ENCODE measurements at regions of chr1 and their contacts with region 1.

Region 1: GRCh38 chr1:225772323-225772768 is 5.3 kb upstream of the SRP9 start:
- DNase-seq: peak; percentile 87
- H3K4me3 ChIP-seq: no peak overlapping the region
- H3K27ac ChIP-seq: no peak overlapping the region
- H3K4me1 ChIP-seq: peaks cover 19% of the 10 kb centered on the region
- H3K27me3 ChIP-seq: no peaks in the 10 kb centered on the region
- CTCF ChIP-seq: peak; percentile 88 to 90
- POLR2A ChIP-seq: no peak

Region 2: DNA sequence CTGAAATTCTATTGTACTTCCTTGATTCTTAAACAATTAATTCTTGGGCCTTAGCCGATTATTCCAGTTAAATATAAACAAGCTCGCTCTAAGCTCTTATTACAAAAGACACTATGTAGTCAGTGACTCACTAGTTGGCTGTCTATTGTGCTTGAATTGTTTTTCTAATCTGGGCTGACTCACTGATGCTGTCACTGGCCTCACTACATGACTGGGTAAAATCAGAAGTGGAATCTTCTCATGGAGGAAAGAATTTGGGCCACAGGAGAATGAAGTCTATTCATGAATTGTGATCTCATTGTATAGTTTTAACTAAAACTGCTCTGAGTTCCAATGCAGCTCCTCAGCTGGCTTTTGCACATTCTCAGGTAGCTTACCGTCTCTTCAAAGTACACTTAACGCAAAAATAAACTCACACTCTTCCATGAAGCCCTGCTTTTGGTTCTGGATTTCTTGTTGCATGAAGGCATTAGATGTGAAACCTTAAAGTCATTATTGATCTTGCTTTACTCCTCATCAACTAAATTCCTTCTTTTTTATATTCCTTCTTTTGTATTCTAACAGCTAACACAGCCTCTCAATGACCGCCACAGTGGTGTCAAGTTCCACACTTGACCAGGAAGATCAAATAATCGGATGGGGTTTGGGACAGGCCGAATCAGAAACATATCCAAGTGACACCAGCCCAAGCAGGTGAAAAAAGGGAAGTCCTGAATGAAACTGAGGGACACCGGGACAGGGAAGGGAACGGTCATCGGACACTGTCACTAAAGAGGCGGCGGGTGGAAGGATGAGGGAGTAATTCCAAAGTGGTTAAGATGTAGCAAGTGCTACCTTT is 263.6 kb before region 1 on chr1:
- CTCF ChIA-PET with region 1: interaction called, 19 read pairs
- POLR2A ChIA-PET with region 1: interaction called, 4 read pairs
- dilution Hi-C with region 1: no loop called
- intact Hi-C with region 1: no loop called
- DNase-seq: peak; percentile 97
- H3K4me3 ChIP-seq: no peak overlapping the region
- H3K27ac ChIP-seq: peak overlapping the region; percentile 72
- H3K4me1 ChIP-seq: peaks cover 23% of the 10 kb centered on the region
- H3K27me3 ChIP-seq: no peaks in the 10 kb centered on the region
- CTCF ChIP-seq: no peak
- POLR2A ChIP-seq: no peak

Region 3: DNA sequence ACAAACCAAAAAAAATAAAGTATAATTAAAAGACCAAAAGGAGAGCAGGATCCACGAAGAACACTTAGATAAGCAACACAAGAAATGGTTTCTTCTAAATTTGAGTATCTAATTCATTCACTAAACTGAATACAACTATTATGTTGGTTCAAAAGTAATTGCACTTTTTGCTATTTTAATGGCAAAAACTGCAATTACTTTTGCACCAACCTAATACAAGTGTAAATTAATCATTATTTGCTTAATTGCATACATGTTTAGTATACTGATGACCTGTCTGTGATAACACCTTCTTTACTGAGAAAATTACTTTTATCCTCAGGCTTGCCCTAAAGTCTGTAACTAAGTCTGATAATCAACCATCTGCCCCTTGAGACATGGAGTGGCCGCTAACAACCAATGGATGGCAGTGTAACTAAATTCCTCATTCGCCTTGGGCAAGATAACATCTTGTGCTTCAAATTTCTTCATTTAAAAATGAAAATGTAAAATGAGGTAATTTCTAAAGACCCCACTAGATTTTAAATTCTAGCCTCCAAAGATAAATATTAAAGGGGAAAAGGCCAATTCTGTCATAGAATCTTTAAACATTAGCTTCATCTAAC is 204.7 kb before region 1 on chr1:
- CTCF ChIA-PET with region 1: interaction called, 16 read pairs
- POLR2A ChIA-PET with region 1: no interaction called
- dilution Hi-C with region 1: no loop called
- intact Hi-C with region 1: loop called (anchors 1 kb)
- DNase-seq: peak; percentile 22
- H3K4me3 ChIP-seq: no peak overlapping the region
- H3K27ac ChIP-seq: no peak overlapping the region
- H3K4me1 ChIP-seq: no peaks in the 10 kb centered on the region
- H3K27me3 ChIP-seq: no peaks in the 10 kb centered on the region
- CTCF ChIP-seq: no peak
- POLR2A ChIP-seq: no peak

Region 4: DNA sequence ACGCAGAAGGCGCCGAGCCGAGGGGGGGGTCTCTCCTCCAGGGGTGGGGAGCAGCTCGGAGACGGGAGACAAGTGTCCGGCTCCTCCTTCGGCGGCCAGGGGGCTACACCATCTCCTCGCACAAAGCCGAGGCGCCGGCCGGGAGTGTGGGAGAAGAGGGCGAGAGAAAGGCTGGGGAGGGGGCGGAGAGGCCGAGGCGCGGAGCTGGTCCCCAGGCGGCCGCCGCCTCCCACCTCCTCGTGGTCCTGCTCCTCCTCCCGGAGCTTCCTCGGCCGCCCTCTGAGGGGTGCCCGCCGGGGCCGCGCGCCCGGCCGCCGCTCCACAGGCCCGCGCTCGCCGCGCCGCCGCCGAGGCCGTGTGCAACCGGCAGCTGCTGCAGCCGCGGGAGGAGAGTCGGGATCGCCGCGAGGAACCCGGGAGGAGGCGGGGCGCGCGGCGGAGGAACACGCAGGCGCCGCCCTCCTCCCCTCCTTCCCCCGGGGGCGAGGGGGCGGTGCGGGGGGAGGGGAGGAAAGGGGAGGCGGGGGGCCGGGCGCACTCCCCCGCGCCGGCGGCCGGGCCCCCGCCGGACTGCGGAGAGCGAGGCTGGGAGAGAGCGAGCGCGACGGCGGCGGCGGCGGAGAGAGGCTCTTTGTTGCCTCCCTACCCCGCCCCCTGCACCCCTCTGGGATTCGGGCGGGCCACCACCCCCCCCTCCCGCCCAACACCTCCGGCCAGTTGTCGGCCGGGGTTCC is 119.5 kb before region 1 on chr1 and contains the start of gene ENAH:
- CTCF ChIA-PET with region 1: interaction called, 34 read pairs
- POLR2A ChIA-PET with region 1: interaction called, 5 read pairs
- dilution Hi-C with region 1: no loop called
- intact Hi-C with region 1: loop called (anchors 1 kb)
- DNase-seq: peak; percentile 73
- H3K4me3 ChIP-seq: peak within 1 kb of the TSS; percentile 49 to 99 (median 98)
- H3K27ac ChIP-seq: peak within 1 kb of the TSS; percentile 94
- H3K4me1 ChIP-seq: peaks cover 46% of the 10 kb centered on the region
- H3K27me3 ChIP-seq: no peaks in the 10 kb centered on the region
- CTCF ChIP-seq: no peak
- POLR2A ChIP-seq: peak; percentile 83
- total RNA-seq, gene ENAH: 80.3 and 95.6 TPM in 2 replicates

Region 5: GRCh38 chr1:225845571-225846259 is 73.4 kb after region 1 on chr1:
- CTCF ChIA-PET with region 1: interaction called, 29 read pairs
- POLR2A ChIA-PET with region 1: no interaction called
- dilution Hi-C with region 1: no loop called
- intact Hi-C with region 1: loop called (anchors 1 kb)
- DNase-seq: peak; percentile 70
- H3K4me3 ChIP-seq: no peak overlapping the region
- H3K27ac ChIP-seq: no peak overlapping the region
- H3K4me1 ChIP-seq: no peaks in the 10 kb centered on the region
- H3K27me3 ChIP-seq: no peaks in the 10 kb centered on the region
- CTCF ChIP-seq: peak; percentile 72 to 91
- POLR2A ChIP-seq: no peak